Activated CD4-positive, alpha-beta memory T cell treated with anti-CD3 and anti-CD28 coated beads for 36 hours (primary cell): ENCODE measurements at regions of chr3 and their contacts with region 1.

Region 1: DNA sequence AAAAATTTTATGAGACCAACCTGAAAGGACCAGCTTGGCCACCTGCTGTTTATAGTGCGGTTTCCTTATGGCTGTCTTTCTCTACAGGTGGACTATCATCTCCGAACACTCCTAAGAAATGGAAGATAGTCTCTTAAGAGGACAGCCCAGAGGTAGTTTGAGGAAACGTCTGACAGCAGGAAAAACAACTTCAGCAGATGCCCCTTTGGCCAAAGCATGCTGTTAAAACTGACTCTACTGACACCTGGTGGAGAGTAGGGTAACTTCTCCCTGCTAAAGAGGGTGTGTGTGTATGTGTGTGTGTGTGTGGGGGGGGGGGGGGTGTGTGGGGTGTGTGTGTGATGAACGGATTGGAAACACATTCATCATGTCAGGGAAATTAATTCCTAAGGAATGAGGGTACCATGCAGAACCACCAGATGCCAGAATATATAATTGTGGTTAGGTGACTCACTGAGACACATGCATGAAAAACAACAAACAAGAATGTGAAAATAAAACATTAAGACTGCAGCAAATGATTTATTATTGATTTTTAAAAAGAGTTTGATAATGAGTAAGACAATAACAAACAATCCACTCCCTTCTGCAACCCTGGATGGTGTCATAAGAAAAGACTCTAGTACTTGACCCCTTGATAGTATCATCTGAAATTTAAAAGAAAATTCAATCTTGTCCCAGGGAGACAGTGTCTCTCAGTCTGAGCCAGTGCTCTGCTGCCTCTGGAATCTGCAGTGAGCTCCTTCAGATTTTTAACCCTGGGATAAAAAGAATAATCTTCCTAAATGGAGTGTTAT is 256.5 kb downstream of the THRB start:
- DNase-seq: peak; percentile 28
- H3K4me3 Mint-ChIP-seq: no peak overlapping the region
- H3K27ac Mint-ChIP-seq: no peak overlapping the region
- H3K4me1 Mint-ChIP-seq: peaks cover 3% of the 10 kb centered on the region
- H3K27me3 Mint-ChIP-seq: peaks cover 10% of the 10 kb centered on the region

Region 2: DNA sequence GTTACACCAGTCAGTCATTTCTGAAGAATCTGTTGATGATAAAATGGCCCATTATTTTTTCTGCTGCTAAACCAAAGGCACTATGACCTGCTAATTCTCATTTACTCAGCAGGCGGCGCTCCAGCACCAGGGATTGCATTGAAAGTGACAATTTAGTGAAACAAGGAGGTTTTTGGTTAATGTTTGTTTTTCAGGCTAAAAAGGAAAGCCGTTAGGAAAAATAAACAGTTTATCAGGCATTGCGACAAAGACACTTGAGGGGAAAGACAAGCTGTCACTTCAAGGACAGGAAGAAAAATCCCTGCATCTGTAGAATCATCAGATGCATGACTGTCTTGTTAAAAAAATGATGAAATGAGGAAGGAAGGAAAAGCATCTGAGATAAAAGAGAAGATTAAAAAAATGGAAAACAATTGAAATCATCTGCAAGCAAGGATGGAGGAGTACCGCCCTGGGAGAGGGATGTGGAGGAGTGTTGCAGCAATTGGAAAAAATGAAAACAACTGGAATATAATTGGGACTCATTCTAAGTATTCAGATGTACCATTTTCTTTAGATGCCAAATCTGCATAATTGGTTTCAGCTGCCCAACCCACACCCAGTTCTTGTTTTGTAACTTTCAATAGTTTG is 239.0 kb before region 1 on chr3:
- CTCF ChIA-PET with region 1: interaction called, 14 read pairs
- POLR2A ChIA-PET with region 1: no interaction called
- intact Hi-C with region 1: loop called (anchors 1 kb)
- DNase-seq: peak; percentile 80
- H3K4me3 Mint-ChIP-seq: no peak overlapping the region
- H3K27ac Mint-ChIP-seq: no peak overlapping the region
- H3K4me1 Mint-ChIP-seq: peaks cover 3% of the 10 kb centered on the region
- H3K27me3 Mint-ChIP-seq: peaks cover 3% of the 10 kb centered on the region

Region 3: DNA sequence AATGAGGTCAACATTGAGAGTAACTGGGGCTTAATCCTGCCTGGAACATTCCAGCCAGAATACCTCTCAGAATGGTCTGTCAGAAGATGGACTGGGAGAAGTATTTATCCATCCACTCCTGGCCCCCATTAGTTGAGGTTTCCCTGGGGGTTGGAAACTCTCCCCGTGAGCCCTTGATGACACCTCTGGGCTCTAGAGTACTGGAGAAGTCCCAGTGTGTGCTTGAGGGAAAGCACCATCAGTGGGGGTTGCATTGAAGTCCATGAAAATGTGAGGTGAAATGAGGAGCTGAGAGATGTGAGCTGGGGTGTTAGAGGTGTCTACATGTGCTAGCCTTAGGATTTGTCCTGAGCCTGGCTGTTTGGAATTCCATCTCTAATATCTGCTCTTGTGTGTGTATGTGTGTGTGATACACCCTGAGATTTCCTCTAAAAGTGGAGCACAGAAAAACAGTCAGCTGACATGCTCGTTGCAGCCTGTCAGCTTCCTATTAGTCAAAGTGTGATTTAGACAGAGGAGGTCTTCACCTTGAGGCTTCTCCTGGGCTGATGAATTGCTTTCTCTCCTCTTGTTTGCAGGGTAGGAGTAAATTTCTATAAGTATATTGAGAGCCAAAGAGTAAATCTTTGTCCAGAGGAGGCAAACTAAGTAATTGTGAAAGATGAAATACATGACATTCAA is 225.4 kb before region 1 on chr3:
- CTCF ChIA-PET with region 1: no interaction called
- POLR2A ChIA-PET with region 1: no interaction called
- intact Hi-C with region 1: no loop called
- DNase-seq: no peak
- H3K4me3 Mint-ChIP-seq: no peak overlapping the region
- H3K27ac Mint-ChIP-seq: no peak overlapping the region
- H3K4me1 Mint-ChIP-seq: no peaks in the 10 kb centered on the region
- H3K27me3 Mint-ChIP-seq: no peaks in the 10 kb centered on the region

Region 4: DNA sequence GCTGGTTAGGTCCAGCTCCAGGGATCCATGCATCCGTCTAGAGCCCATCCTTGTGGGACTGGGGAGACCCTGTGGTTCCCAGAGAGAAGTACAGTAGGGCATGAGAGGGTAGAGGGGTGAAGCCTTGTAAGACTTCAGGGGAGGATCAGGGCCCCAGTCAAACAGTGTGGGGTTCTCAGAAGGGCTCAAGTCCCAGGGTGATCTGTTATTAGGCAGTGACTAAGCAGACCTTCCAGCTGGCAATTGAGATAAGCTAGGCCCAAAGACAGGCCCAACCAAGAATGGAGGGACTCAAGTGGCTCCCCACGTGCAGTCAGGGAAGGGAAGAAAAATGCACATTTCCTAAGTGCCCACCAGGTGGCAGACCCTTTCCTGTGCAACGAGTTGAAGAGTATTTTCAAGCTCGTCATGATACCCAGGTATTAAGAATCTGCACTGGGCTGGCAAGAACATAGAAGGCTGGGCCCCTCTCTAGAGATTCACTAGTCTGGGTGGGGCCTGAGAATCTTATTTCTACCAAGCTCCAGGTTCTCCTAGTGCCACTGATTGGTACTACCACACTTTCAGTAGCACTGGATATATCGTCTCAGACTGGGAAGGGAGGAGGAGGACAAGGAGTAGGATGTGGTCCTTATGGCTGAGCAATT is 52.3 kb before region 1 on chr3:
- CTCF ChIA-PET with region 1: interaction called, 7 read pairs
- POLR2A ChIA-PET with region 1: no interaction called
- intact Hi-C with region 1: loop called (anchors 1 kb)
- DNase-seq: peak; percentile 30
- H3K4me3 Mint-ChIP-seq: no peak overlapping the region
- H3K27ac Mint-ChIP-seq: no peak overlapping the region
- H3K4me1 Mint-ChIP-seq: no peaks in the 10 kb centered on the region
- H3K27me3 Mint-ChIP-seq: peaks cover 2% of the 10 kb centered on the region

Region 5: GRCh38 chr3:24428481-24428880 is 190.3 kb after region 1 on chr3:
- CTCF ChIA-PET with region 1: no interaction called
- POLR2A ChIA-PET with region 1: no interaction called
- intact Hi-C with region 1: no loop called
- DNase-seq: no peak
- H3K4me3 Mint-ChIP-seq: no peak overlapping the region
- H3K27ac Mint-ChIP-seq: no peak overlapping the region
- H3K4me1 Mint-ChIP-seq: no peaks in the 10 kb centered on the region
- H3K27me3 Mint-ChIP-seq: no peaks in the 10 kb centered on the region

Region 6: GRCh38 chr3:24763415-24763814 is 525.2 kb after region 1 on chr3:
- CTCF ChIA-PET with region 1: no interaction called
- POLR2A ChIA-PET with region 1: no interaction called
- intact Hi-C with region 1: no loop called
- DNase-seq: no peak
- H3K4me3 Mint-ChIP-seq: no peak overlapping the region
- H3K27ac Mint-ChIP-seq: no peak overlapping the region
- H3K4me1 Mint-ChIP-seq: no peaks in the 10 kb centered on the region
- H3K27me3 Mint-ChIP-seq: no peaks in the 10 kb centered on the region